ENCODE measurements at regions of chr2 and their contacts with region 1.

Region 1: GRCh38 chr2:219388127-219388844 is 574 bp upstream of the DNPEP start:
- DNase-seq: peak; percentile 97 to 99 (median 98)
- H3K4me3 ChIP-seq: peak overlapping the region; percentile 30
- H3K4me3 Mint-ChIP-seq: peak overlapping the region; percentile 63 to 96 (median 72)
- H3K27ac ChIP-seq: peak overlapping the region; percentile 77
- H3K27ac Mint-ChIP-seq: peak overlapping the region; percentile 90 to 96 (median 92)
- H3K4me1 ChIP-seq: peaks cover 22% of the 10 kb centered on the region
- H3K4me1 Mint-ChIP-seq: peaks cover 11 to 36% (median 22%) of the 10 kb centered on the region in 4 donors
- H3K27me3 ChIP-seq: no peaks in the 10 kb centered on the region
- H3K27me3 Mint-ChIP-seq: no peaks in the 10 kb centered on the region

Region 2: DNA sequence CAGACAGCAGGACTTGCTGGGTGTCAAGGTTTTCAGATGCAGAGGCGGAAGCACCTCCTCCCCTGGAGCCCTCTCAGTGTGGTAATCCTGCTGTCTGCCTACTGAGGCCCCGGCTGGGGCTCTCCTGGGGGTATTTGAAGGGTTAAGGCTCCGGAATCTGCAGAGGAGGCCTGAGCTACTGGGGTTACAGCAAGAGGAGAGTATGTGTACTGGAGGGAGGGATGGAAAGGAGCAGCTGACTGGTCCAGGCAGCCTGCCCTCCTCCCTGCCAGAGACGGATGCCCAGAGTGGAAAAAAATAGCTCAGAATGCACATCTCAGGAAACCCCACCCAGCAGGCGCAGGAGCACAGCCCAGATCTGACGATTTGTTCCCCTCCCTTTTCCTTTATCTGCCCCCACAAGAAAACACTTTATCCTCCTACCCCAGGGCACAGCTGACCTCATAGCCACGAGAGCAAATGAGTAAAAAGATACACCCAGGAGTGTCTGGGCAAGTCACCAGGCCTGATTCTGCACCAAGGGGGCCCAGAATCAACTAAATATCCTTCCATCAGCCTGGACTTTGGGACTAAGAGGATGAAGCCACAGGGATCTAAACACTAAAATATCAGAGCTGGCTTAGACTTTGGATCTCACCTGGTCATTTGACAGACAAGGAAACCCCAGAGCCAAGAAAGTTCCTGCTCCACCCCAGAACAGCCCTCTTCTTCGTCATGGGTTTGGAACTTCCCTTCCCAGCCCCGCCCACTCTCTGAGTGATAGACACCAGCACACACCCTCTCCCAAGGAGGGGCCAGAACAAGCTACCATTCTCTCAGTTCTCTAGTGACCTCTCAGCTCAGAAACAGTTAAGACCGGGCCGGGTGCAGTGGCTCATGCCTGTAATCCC is 1101.5 kb before region 1 on chr2:
- CTCF ChIA-PET with region 1: no interaction called
- POLR2A ChIA-PET with region 1: no interaction called
- intact Hi-C with region 1: loop called (anchors 5 kb)
- DNase-seq: peak; percentile 84 to 97 (median 87)
- H3K4me3 ChIP-seq: peak overlapping the region; percentile 53 to 86
- H3K4me3 Mint-ChIP-seq: peak overlapping the region; percentile 90 to 97 (median 91)
- H3K27ac ChIP-seq: peak overlapping the region; percentile 94
- H3K27ac Mint-ChIP-seq: peak overlapping the region; percentile 98 to 100 (median 99)
- H3K4me1 ChIP-seq: peaks cover 92% of the 10 kb centered on the region
- H3K4me1 Mint-ChIP-seq: peaks cover 55 to 95% (median 73%) of the 10 kb centered on the region in 4 donors
- H3K27me3 ChIP-seq: no peaks in the 10 kb centered on the region
- H3K27me3 Mint-ChIP-seq: no peaks in the 10 kb centered on the region

Region 3: GRCh38 chr2:218659258-218659987 is 728.9 kb before region 1 on chr2 and contains the starts of genes BCS1L and ZNF142:
- CTCF ChIA-PET with region 1: interaction called, 3 read pairs
- POLR2A ChIA-PET with region 1: interaction called, 7 read pairs
- intact Hi-C with region 1: loop called (anchors 1 kb)
- DNase-seq: peak; percentile 90 to 94 (median 92)
- H3K4me3 ChIP-seq: peak within 1 kb of the TSS; percentile 50 to 78
- H3K4me3 Mint-ChIP-seq: peak within 1 kb of the TSS; percentile 91 to 100 (median 93)
- H3K27ac ChIP-seq: peak within 1 kb of the TSS; percentile 71
- H3K27ac Mint-ChIP-seq: peak within 1 kb of the TSS; percentile 92 to 98 (median 94)
- H3K4me1 ChIP-seq: peaks cover 28% of the 10 kb centered on the region
- H3K4me1 Mint-ChIP-seq: peaks cover 17 to 37% (median 31%) of the 10 kb centered on the region in 4 donors
- H3K27me3 ChIP-seq: no peaks in the 10 kb centered on the region
- H3K27me3 Mint-ChIP-seq: no peaks in the 10 kb centered on the region
- total RNA-seq, gene BCS1L: 53.0 to 57.2 TPM
- total RNA-seq, gene ZNF142: 44.4 to 54.5 TPM

Region 4: DNA sequence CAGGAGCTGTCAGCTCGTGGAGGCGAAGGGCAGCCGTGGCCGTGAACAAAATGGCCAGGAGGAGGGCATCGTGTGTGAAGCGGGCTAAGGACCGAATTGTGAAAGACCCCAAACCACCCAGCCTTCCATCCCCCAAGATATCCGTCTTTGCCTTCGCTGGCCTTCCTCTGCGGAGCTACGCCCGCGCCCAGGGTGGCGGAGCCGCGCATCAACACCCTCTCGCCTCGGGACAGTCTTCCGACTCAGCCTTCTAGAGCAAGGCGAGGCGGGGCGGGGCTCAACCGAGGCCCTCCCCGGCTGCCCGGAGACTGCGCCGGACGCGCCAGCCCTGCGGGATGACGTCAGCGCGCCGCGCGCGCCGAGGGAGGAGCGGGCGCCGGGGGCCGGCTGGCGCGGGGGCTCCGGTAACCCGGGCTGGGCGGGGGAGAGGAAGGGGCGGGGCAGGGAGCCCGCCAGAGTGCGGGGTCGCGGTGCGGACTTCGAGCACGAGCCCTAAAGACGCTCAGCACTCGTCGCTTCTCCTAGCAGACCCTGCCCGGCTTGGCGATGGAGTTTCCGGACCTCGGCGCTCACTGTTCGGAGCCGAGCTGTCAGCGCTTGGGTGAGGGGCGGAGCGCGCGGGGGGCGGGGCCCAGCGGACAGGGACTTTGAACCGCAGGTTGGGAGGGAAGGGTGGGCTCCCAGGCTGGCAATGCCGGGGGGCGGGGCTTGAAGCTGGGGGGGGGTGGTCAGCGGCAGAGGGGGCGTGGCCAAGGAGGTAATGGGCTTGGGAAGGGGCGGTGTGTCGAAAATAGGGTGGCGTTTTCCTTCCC is 181.6 kb before region 1 on chr2 and contains the start of gene ZFAND2B:
- CTCF ChIA-PET with region 1: interaction called, 5 read pairs
- POLR2A ChIA-PET with region 1: interaction called, 4 read pairs
- intact Hi-C with region 1: loop called (anchors 2 kb)
- DNase-seq: peak; percentile 93 to 98 (median 95)
- H3K4me3 ChIP-seq: peak within 1 kb of the TSS; percentile 67 to 88
- H3K4me3 Mint-ChIP-seq: peak within 1 kb of the TSS; percentile 88 to 95 (median 94)
- H3K27ac ChIP-seq: peak within 1 kb of the TSS; percentile 87
- H3K27ac Mint-ChIP-seq: peak within 1 kb of the TSS; percentile 93 to 98 (median 97)
- H3K4me1 ChIP-seq: peaks cover 39% of the 10 kb centered on the region
- H3K4me1 Mint-ChIP-seq: peaks cover 22 to 54% (median 37%) of the 10 kb centered on the region in 4 donors
- H3K27me3 ChIP-seq: no peaks in the 10 kb centered on the region
- H3K27me3 Mint-ChIP-seq: no peaks in the 10 kb centered on the region
- total RNA-seq, gene ZFAND2B: 73.3 to 79.8 TPM

Region 5: DNA sequence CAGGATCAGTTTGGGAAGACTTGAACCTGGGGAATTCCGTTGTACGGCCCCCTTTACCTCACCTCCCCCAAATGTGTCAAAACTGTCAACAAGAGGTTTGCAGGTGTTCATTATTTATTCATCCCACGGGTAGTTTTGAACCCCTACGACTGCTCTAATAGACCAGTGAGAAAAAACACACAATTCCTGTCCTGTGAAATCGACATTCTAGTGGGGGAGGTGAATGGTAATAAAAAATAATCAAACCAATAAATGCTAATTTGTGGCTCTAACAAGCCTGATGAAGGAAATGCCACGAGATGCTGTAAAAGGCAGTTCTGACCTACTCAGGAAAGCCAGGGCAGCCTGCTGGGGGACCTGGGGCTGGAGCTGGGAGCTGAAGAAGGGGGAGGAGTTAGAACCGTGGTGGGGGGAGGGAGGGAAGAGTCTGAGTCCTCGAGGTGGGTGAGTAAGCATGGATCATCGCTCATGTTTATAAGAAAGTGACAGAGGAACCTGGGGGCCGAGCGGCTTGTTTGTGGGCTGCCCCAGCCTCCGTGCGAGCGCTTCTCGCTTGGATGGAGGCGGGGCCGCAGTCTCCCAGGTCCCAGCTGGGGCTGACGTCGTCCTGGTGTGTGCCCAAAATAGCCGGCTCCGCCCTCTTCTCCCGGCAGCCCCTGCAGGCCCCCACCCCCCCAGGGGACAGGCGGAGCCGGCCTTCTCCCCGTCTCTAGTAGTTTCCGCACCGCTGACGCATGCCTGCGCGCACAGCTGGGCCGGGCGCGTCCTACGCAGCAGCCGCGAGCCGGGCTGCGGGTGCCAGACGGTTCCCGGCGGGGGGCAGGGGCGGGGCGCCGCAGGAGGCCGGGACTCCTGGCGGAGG is 109.4 kb before region 1 on chr2 and contains the start of gene DNAJB2:
- CTCF ChIA-PET with region 1: interaction called, 4 read pairs
- POLR2A ChIA-PET with region 1: interaction called, 23 read pairs
- intact Hi-C with region 1: loop called (anchors 1 kb)
- DNase-seq: peak; percentile 98 to 100 (median 99)
- H3K4me3 ChIP-seq: peak within 1 kb of the TSS; percentile 48 to 71
- H3K4me3 Mint-ChIP-seq: peak within 1 kb of the TSS; percentile 88 to 98 (median 96)
- H3K27ac ChIP-seq: peak within 1 kb of the TSS; percentile 98
- H3K27ac Mint-ChIP-seq: peak within 1 kb of the TSS; percentile 96 to 100 (median 100)
- H3K4me1 ChIP-seq: peaks cover 40% of the 10 kb centered on the region
- H3K4me1 Mint-ChIP-seq: peaks cover 17 to 51% (median 40%) of the 10 kb centered on the region in 4 donors
- H3K27me3 ChIP-seq: no peaks in the 10 kb centered on the region
- H3K27me3 Mint-ChIP-seq: no peaks in the 10 kb centered on the region
- total RNA-seq, gene DNAJB2: 110 to 117 TPM

Region 6: GRCh38 chr2:219430633-219431615 is 42.6 kb after region 1 on chr2:
- CTCF ChIA-PET with region 1: no interaction called
- POLR2A ChIA-PET with region 1: no interaction called
- intact Hi-C with region 1: no loop called
- DNase-seq: no peak
- H3K4me3 ChIP-seq: no peak overlapping the region
- H3K4me3 Mint-ChIP-seq: peak overlapping the region in 1 of 8 donors; percentile 7
- H3K27ac ChIP-seq: no peak overlapping the region
- H3K27ac Mint-ChIP-seq: peak overlapping the region in 1 of 7 donors; percentile 27
- H3K4me1 ChIP-seq: no peaks in the 10 kb centered on the region
- H3K4me1 Mint-ChIP-seq: peaks cover 0 to 7% (median 3%) of the 10 kb centered on the region in 4 donors
- H3K27me3 ChIP-seq: peaks cover 7% of the 10 kb centered on the region
- H3K27me3 Mint-ChIP-seq: peaks cover 6 to 15% of the 10 kb centered on the region in 2 donors

Region 7: DNA sequence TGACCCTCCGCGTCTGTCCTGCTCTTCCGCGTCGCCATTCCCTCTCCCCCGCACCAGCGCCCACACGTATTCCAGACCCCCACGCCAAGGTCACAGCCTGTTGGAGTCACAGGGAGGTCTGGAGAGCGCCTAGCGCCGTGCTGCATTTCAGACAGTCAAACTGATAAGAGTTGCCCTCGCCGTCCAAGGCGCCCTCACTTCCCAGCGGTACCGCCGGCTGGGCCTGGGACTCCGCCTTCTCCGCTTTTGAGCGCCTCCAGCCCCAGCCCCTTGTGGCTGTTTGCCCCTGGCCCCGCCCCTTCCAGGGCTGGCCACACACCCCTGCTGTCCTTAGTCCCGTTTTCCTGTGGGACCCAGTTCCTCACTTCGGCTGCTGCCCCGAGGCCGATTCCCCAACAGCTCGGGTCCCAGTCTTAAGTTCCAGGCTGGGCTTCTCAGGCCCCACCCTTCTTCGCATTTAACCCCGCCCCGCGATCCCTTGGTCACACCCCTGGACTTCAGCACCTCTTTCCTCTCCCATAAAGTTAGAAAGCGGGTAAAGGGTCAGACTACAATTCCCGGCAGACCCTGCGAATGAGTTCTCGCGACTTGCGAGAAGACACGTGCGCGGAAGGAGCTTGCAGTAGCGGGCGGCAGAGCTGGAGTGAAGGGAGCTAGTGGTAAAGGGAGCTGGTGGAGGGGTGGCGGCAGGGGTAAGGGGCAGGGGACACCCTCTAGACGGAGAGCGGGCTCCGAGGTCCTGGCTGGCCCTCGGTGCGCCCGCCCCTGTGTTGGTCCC is 110.2 kb after region 1 on chr2 and contains the start of gene GMPPA:
- CTCF ChIA-PET with region 1: interaction called, 10 read pairs
- POLR2A ChIA-PET with region 1: interaction called, 23 read pairs
- intact Hi-C with region 1: loop called (anchors 1 kb)
- DNase-seq: peak; percentile 91 to 97 (median 92)
- H3K4me3 ChIP-seq: peak within 1 kb of the TSS; percentile 62 to 70
- H3K4me3 Mint-ChIP-seq: peak within 1 kb of the TSS; percentile 92 to 100 (median 99)
- H3K27ac ChIP-seq: peak within 1 kb of the TSS; percentile 53
- H3K27ac Mint-ChIP-seq: peak within 1 kb of the TSS; percentile 60 to 99 (median 94)
- H3K4me1 ChIP-seq: peaks cover 37% of the 10 kb centered on the region
- H3K4me1 Mint-ChIP-seq: peaks cover 22 to 39% (median 31%) of the 10 kb centered on the region in 4 donors
- H3K27me3 ChIP-seq: peaks cover 33% of the 10 kb centered on the region
- H3K27me3 Mint-ChIP-seq: peaks cover 31 to 34% of the 10 kb centered on the region in 2 donors
- total RNA-seq, gene GMPPA: 45.2 to 48.3 TPM

Region 8: GRCh38 chr2:219597552-219598307 is 209.4 kb after region 1 on chr2 and contains the start of gene STK11IP:
- CTCF ChIA-PET with region 1: no interaction called
- POLR2A ChIA-PET with region 1: interaction called, 12 read pairs
- intact Hi-C with region 1: loop called (anchors 1 kb)
- DNase-seq: peak; percentile 87 to 93 (median 88)
- H3K4me3 ChIP-seq: peak within 1 kb of the TSS; percentile 62 to 100
- H3K4me3 Mint-ChIP-seq: peak within 1 kb of the TSS; percentile 90 to 97 (median 96)
- H3K27ac ChIP-seq: peak within 1 kb of the TSS; percentile 72
- H3K27ac Mint-ChIP-seq: peak within 1 kb of the TSS; percentile 90 to 99 (median 97)
- H3K4me1 ChIP-seq: peaks cover 14% of the 10 kb centered on the region
- H3K4me1 Mint-ChIP-seq: peaks cover 10 to 24% (median 17%) of the 10 kb centered on the region in 4 donors
- H3K27me3 ChIP-seq: no peaks in the 10 kb centered on the region
- H3K27me3 Mint-ChIP-seq: peaks cover 3 to 7% of the 10 kb centered on the region in 2 donors
- total RNA-seq, gene STK11IP: 48.7 to 50.2 TPM

Region 9: GRCh38 chr2:220779931-220780330 is 1391.6 kb after region 1 on chr2:
- CTCF ChIA-PET with region 1: no interaction called
- POLR2A ChIA-PET with region 1: no interaction called
- intact Hi-C with region 1: no loop called
- DNase-seq: no peak
- H3K4me3 ChIP-seq: no peak overlapping the region
- H3K4me3 Mint-ChIP-seq: no peak overlapping the region
- H3K27ac ChIP-seq: no peak overlapping the region
- H3K27ac Mint-ChIP-seq: no peak overlapping the region
- H3K4me1 ChIP-seq: no peaks in the 10 kb centered on the region
- H3K4me1 Mint-ChIP-seq: no peaks in the 10 kb centered on the region
- H3K27me3 ChIP-seq: no peaks in the 10 kb centered on the region
- H3K27me3 Mint-ChIP-seq: peaks cover 3 to 5% of the 10 kb centered on the region in 2 donors